H1 (cell line): ENCODE measurements at regions of chr10 and their contacts with region 1.

Region 1: GRCh38 chr10:59865101-59865500 is 41.3 kb downstream of the CCDC6 start:
- DNase-seq: peak in 1 of 2 experiments; percentile 19
- H3K4me3 ChIP-seq: no peak overlapping the region
- H3K27ac ChIP-seq: no peak overlapping the region
- H3K4me1 ChIP-seq: peaks cover 0 to 13% (median 10%) of the 10 kb centered on the region in 4 experiments; a peak in 5 of 7 replicates
- H3K27me3 ChIP-seq: no peaks in the 10 kb centered on the region
- CTCF ChIP-seq: peak in 2 of 3 experiments; percentile 42 to 53; a peak in 3 of 4 replicates
- EP300 ChIP-seq: no peak; a peak in 1 of 3 replicates
- POLR2A ChIP-seq: no peak
- RAD21 ChIP-seq: peak; percentile 75 to 80

Region 2: DNA sequence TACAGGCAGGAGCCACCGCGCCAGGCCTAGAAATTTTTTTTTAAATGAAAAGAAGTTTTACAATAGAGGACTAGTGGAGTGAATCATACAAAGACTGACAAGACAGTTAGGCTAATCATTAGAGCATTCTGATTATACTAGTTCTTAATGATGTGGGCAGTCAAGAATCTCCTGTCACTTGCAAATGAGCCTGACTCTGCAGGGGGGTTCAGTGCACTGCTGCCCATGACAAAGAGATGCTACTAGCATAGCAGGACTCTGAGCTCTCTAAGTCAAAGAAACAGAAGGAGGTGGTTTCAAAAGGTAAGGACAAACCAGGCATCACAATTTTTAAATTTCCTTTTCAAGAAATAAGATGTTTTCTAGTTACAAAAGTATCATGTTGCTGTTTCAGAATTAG is 17.8 kb before region 1 on chr10:
- CTCF ChIA-PET with region 1: interaction called, 22 read pairs
- POLR2A ChIA-PET with region 1: interaction called, 4 read pairs
- DNase-seq: peak; percentile 61 to 85
- H3K4me3 ChIP-seq: peak overlapping the region in 1 of 4 experiments; percentile 32; a peak in 2 of 8 replicates
- H3K27ac ChIP-seq: no peak overlapping the region
- H3K4me1 ChIP-seq: peaks cover 3 to 25% (median 16%) of the 10 kb centered on the region in 4 experiments
- H3K27me3 ChIP-seq: no peaks in the 10 kb centered on the region
- CTCF ChIP-seq: no peak
- EP300 ChIP-seq: peak in 1 of 2 experiments; percentile 58; a peak in 1 of 3 replicates
- POLR2A ChIP-seq: 0 out of 3 replicates have a peak, but pooled peaks of 1 of the 2 experiments have one; percentile 23
- RAD21 ChIP-seq: no peak

Region 3: DNA sequence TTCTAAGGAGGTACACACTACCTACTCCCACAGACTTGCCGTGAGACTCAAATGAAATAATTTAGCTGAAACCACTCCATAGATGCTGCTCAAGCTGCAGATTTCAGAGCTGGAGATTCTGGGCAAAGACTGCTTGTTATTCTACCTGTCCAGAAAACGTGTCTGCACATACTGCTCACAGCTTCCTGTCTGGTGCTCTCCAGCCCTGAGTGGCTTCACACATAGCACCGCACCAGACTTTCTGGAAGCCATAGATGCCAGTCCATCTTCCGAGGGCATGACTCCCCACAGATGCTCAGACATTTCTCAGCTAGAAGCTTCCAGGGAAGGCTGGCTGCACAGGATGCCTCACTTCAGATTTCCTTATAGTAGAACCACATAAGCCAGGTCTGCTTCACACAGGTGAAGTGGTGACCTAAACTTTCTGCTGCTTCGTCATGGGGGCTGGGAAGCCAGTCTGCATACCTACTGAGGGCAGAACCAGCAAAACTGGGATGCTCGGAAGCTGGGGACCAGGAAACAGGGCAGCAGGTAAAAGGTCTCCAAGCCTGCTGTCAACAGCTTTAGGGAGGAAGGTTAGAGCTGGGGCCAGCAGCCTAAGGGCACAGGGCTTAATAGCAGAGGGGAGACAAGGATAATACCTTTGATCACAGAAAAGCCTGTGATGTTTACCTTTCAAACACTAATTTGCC is 23.0 kb after region 1 on chr10:
- CTCF ChIA-PET with region 1: interaction called, 12 read pairs
- POLR2A ChIA-PET with region 1: interaction called, 3 read pairs
- DNase-seq: no peak
- H3K4me3 ChIP-seq: no peak overlapping the region
- H3K27ac ChIP-seq: no peak overlapping the region
- H3K4me1 ChIP-seq: peaks cover 0 to 18% (median 10%) of the 10 kb centered on the region in 4 experiments; a peak in 5 of 7 replicates
- H3K27me3 ChIP-seq: no peaks in the 10 kb centered on the region
- CTCF ChIP-seq: no peak
- EP300 ChIP-seq: no peak
- POLR2A ChIP-seq: no peak
- RAD21 ChIP-seq: no peak

Region 4: DNA sequence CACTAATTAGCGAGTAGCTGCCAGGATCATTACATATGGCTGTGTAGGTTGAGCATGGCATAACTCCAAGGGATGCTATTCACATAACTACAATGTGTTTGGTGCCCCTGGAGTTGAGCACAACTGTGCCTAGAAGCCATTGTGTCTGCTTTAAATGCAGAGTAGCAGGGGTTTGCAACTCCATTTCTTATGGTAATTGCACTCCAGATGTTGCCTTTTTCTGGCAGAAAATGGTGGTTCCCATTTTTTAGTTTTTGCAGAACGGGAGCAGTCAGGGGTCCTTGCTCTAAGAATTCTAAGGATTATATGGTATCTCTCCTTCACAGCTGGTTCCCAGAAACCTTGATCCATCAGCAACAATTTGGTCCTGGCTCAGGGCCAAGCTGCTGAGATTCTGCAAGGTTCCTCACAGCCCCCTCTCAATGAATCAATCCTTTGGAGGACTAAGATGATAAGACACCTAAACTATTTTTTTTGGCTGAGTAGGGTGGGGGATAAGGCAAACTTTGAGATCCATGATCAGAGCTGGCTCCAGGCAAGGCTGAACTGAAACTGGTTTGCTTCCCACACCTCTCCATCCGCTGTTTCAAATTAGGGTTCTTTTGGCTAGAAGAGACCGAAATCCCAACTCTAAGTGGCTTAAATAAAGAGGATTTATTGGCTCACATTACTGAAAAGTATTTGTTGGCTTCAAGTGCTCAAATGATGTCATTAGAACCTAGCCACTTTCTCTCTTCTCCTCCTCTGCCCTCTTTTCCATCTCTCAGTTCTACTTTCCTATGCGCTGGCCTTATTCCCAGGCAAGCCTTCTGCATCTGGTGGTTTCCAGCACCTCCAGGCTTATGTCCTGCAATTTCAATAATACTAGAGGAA is 138.8 kb after region 1 on chr10:
- CTCF ChIA-PET with region 1: no interaction called
- POLR2A ChIA-PET with region 1: no interaction called
- DNase-seq: peak in 1 of 2 experiments; percentile 70
- H3K4me3 ChIP-seq: 0 out of 8 replicates have a peak overlapping the region, but pooled peaks of 1 of the 4 experiments have one; percentile 11
- H3K27ac ChIP-seq: peak overlapping the region; percentile 3; the same call in 1 of the 2 replicates
- H3K4me1 ChIP-seq: peaks cover 0 to 20% (median 11%) of the 10 kb centered on the region in 4 experiments; a peak in 5 of 7 replicates
- H3K27me3 ChIP-seq: no peaks in the 10 kb centered on the region; a peak in 1 of 7 replicates
- CTCF ChIP-seq: no peak
- EP300 ChIP-seq: no peak
- POLR2A ChIP-seq: no peak
- RAD21 ChIP-seq: no peak; a peak in 1 of 4 replicates

Region 5: GRCh38 chr10:60048091-60048501 is 183.0 kb after region 1 on chr10:
- CTCF ChIA-PET with region 1: interaction called, 26 read pairs
- POLR2A ChIA-PET with region 1: no interaction called
- DNase-seq: peak in 1 of 2 experiments; percentile 47
- H3K4me3 ChIP-seq: no peak overlapping the region
- H3K27ac ChIP-seq: no peak overlapping the region
- H3K4me1 ChIP-seq: no peaks in the 10 kb centered on the region; a peak in 2 of 7 replicates
- H3K27me3 ChIP-seq: no peaks in the 10 kb centered on the region
- CTCF ChIP-seq: peak; percentile 29 to 74 (median 66)
- EP300 ChIP-seq: no peak; a peak in 1 of 3 replicates
- POLR2A ChIP-seq: no peak
- RAD21 ChIP-seq: peak; percentile 89 to 90